ENCODE measurements at regions of chr12 and their contacts with region 1.

Region 1: GRCh38 chr12:57693659-57694458 is at the start of gene OS9:
- DNase-seq: peak; percentile 83 to 100 (median 92)
- ATAC-seq: peak; percentile 92
- H3K4me3 ChIP-seq: peak within 1 kb of the TSS; percentile 95
- H3K4me3 Mint-ChIP-seq: no peak within 1 kb of the TSS
- H3K27ac ChIP-seq: peak within 1 kb of the TSS; percentile 59 to 73
- H3K27ac Mint-ChIP-seq: no peak within 1 kb of the TSS
- H3K4me1 ChIP-seq: peaks cover 16% of the 10 kb centered on the region
- H3K4me1 Mint-ChIP-seq: peaks cover 9% of the 10 kb centered on the region
- H3K27me3 ChIP-seq: no peaks in the 10 kb centered on the region
- H3K27me3 Mint-ChIP-seq: peaks cover 11% of the 10 kb centered on the region
- CTCF ChIP-seq: peak; percentile 82
- total RNA-seq, gene OS9: 108 to 112 TPM

Region 2: DNA sequence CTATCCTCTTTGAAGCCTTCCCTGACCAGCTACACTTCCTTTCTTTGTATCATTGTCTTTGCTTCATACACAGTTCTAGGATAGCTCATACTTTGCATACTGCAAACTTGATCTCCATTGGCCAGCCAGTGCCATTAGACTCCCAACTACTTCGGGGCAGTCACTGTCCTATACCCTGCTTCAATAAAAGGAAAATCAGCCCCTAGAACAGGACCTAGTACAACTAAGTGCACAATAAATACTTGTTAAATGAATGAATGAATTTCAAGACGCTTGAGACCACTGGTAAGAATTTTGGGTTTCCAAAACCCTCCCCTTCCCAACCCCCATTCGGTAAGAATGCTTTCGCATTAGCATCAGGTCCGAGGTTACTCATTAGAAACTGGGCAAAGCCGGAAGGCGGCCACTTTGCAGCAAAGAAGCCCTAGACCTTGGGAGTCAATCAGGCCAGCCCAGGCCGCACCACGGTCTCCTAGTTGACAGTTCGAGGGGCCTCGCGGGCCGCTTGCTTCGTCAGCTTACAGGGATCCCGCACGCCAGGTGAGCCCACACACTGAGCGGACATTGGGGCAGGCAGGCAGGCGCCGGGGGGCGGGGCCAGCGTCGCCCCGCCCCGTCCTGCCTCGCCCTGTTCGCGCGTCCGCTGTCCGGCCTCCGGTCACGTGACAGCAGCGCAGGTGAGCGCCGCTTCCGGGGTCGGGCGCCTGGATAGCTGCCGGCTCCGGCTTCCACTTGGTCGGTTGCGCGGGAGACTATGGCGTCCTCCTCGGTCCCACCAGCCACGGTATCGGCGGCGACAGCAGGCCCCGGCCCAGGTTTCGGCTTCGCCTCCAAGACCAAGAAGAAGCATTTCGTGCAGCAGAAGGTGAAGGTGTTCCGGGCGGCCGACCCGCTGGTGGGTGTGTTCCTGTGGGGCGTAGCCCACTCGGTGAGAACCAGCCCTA is 103.1 kb before region 1 on chr12 and contains the start of gene PIP4K2C:
- CTCF ChIA-PET with region 1: no interaction called
- POLR2A ChIA-PET with region 1: no interaction called
- intact Hi-C with region 1: loop called in 1 of 2 experiments (anchors 5 kb)
- DNase-seq: peak; percentile 49 to 92 (median 70)
- ATAC-seq: peak; percentile 75
- H3K4me3 ChIP-seq: peak within 1 kb of the TSS; percentile 99
- H3K4me3 Mint-ChIP-seq: peak within 1 kb of the TSS; percentile 91
- H3K27ac ChIP-seq: peak within 1 kb of the TSS; percentile 67 to 73
- H3K27ac Mint-ChIP-seq: peak within 1 kb of the TSS; percentile 84
- H3K4me1 ChIP-seq: peaks cover 30% of the 10 kb centered on the region
- H3K4me1 Mint-ChIP-seq: peaks cover 39% of the 10 kb centered on the region
- H3K27me3 ChIP-seq: peaks cover 0 to 10% of the 10 kb centered on the region in 2 experiments
- H3K27me3 Mint-ChIP-seq: no peaks in the 10 kb centered on the region
- CTCF ChIP-seq: no peak
- total RNA-seq, gene PIP4K2C: 15.1 to 17.3 TPM

Region 3: GRCh38 chr12:57632694-57633477 is 61.0 kb before region 1 on chr12 and contains the start of gene B4GALNT1:
- CTCF ChIA-PET with region 1: interaction called, 3 read pairs
- POLR2A ChIA-PET with region 1: interaction called, 6 read pairs
- intact Hi-C with region 1: loop called in 1 of 2 experiments (anchors 5 kb)
- DNase-seq: peak; percentile 33 to 84 (median 56)
- ATAC-seq: peak; percentile 93
- H3K4me3 ChIP-seq: peak within 1 kb of the TSS; percentile 56
- H3K4me3 Mint-ChIP-seq: peak within 1 kb of the TSS; percentile 72
- H3K27ac ChIP-seq: no peak within 1 kb of the TSS
- H3K27ac Mint-ChIP-seq: no peak within 1 kb of the TSS
- H3K4me1 ChIP-seq: peaks cover 22% of the 10 kb centered on the region
- H3K4me1 Mint-ChIP-seq: peaks cover 18% of the 10 kb centered on the region
- H3K27me3 ChIP-seq: peaks cover 53 to 61% of the 10 kb centered on the region in 2 experiments
- H3K27me3 Mint-ChIP-seq: peaks cover 67% of the 10 kb centered on the region
- CTCF ChIP-seq: peak; percentile 89
- total RNA-seq, gene B4GALNT1: not detected

Region 4: GRCh38 chr12:57735952-57736740 is 42.3 kb after region 1 on chr12:
- CTCF ChIA-PET with region 1: no interaction called
- POLR2A ChIA-PET with region 1: interaction called, 10 read pairs
- intact Hi-C with region 1: loop called (anchors 5 kb)
- DNase-seq: no peak
- ATAC-seq: no peak
- H3K4me3 ChIP-seq: no peak overlapping the region
- H3K4me3 Mint-ChIP-seq: no peak overlapping the region
- H3K27ac ChIP-seq: peak overlapping the region in 1 of 2 donors; percentile 30
- H3K27ac Mint-ChIP-seq: peak overlapping the region; percentile 67
- H3K4me1 ChIP-seq: peaks cover 42% of the 10 kb centered on the region
- H3K4me1 Mint-ChIP-seq: peaks cover 42% of the 10 kb centered on the region
- H3K27me3 ChIP-seq: no peaks in the 10 kb centered on the region
- H3K27me3 Mint-ChIP-seq: no peaks in the 10 kb centered on the region
- CTCF ChIP-seq: no peak